OCI-LY7 (cell line): ENCODE measurements at regions of chrX and their contacts with region 1.

Region 1: GRCh38 chrX:100928660-100929613 is at the start of gene XKRX:
- DNase-seq: peak; percentile 81
- H3K4me3 ChIP-seq: peak within 1 kb of the TSS; percentile 77
- H3K27ac ChIP-seq: peak within 1 kb of the TSS; percentile 82
- H3K4me1 ChIP-seq: peaks cover 31% of the 10 kb centered on the region
- CTCF ChIP-seq: no peak
- total RNA-seq, gene XKRX: 5.8 and 6.4 TPM in 2 replicates

Region 2: GRCh38 chrX:100812216-100813158 is 116.5 kb before region 1 on chrX:
- CTCF ChIA-PET with region 1: no interaction called
- POLR2A ChIA-PET with region 1: no interaction called
- intact Hi-C with region 1: no loop called
- DNase-seq: no peak
- H3K4me3 ChIP-seq: no peak overlapping the region
- H3K27ac ChIP-seq: no peak overlapping the region
- H3K4me1 ChIP-seq: no peaks in the 10 kb centered on the region
- CTCF ChIP-seq: no peak

Region 3: DNA sequence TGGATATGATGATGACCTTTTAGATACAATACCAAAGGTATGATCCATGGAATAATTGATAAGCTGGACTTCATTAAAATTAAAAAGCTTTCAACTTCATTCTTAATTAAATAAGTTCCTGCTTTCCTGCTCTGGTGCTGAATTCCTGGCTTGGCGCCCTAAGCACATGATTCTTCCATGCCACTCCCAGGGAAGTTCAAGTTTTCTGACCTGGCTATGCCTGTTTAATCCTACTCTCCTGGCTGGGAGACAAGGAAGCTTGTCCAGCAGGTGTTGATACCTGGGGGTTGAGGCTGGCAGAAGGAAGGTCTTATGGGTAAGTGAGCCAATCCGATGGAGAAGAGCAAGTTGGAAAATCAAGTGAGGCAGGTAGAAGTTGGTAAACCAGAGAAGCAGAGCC is 24.5 kb before region 1 on chrX:
- CTCF ChIA-PET with region 1: no interaction called
- POLR2A ChIA-PET with region 1: interaction called, 15 read pairs
- intact Hi-C with region 1: no loop called
- DNase-seq: no peak
- H3K4me3 ChIP-seq: no peak overlapping the region
- H3K27ac ChIP-seq: no peak overlapping the region
- H3K4me1 ChIP-seq: peaks cover 23% of the 10 kb centered on the region
- CTCF ChIP-seq: no peak

Region 4: GRCh38 chrX:100939333-100939732 is 10.4 kb after region 1 on chrX:
- CTCF ChIA-PET with region 1: no interaction called
- POLR2A ChIA-PET with region 1: interaction called, 11 read pairs
- intact Hi-C with region 1: no loop called
- DNase-seq: peak; percentile 68
- H3K4me3 ChIP-seq: no peak overlapping the region
- H3K27ac ChIP-seq: peak overlapping the region; percentile 49
- H3K4me1 ChIP-seq: peaks cover 16% of the 10 kb centered on the region
- CTCF ChIP-seq: no peak